Lower leg skin (tissue), 4 donors: ENCODE measurements at regions of chr1 and their contacts with region 1.

Region 1: GRCh38 chr1:224851210-224851847 is 78.1 kb upstream of the DNAH14 start:
- DNase-seq: peak; percentile 30 to 89
- H3K4me3 ChIP-seq: no peak overlapping the region
- CTCF ChIP-seq: no peak
- POLR2A ChIP-seq: no peak

Region 2: GRCh38 chr1:224513787-224514209 is 337.5 kb before region 1 on chr1:
- intact Hi-C with region 1: loop called (anchors 5 kb)
- DNase-seq: peak; percentile 79 to 97
- H3K4me3 ChIP-seq: no peak overlapping the region
- CTCF ChIP-seq: peak in 1 of 3 donors; percentile 56
- POLR2A ChIP-seq: no peak

Region 3: GRCh38 chr1:224644553-224645154 is 206.7 kb before region 1 on chr1:
- intact Hi-C with region 1: loop called (anchors 10 kb)
- DNase-seq: peak in 1 of 2 donors; percentile 28
- H3K4me3 ChIP-seq: no peak overlapping the region
- CTCF ChIP-seq: no peak
- POLR2A ChIP-seq: no peak